AG04449 (cell line): ENCODE measurements at regions of chr16 and their contacts with region 1.

Region 1: GRCh38 chr16:27235055-27235937 is 32.0 kb downstream of the KDM8 start:
- DNase-seq: peak; percentile 41
- H3K4me3 ChIP-seq: no peak overlapping the region; the same call in 1 of the 2 replicates
- CTCF ChIP-seq: peak; percentile 82

Region 2: DNA sequence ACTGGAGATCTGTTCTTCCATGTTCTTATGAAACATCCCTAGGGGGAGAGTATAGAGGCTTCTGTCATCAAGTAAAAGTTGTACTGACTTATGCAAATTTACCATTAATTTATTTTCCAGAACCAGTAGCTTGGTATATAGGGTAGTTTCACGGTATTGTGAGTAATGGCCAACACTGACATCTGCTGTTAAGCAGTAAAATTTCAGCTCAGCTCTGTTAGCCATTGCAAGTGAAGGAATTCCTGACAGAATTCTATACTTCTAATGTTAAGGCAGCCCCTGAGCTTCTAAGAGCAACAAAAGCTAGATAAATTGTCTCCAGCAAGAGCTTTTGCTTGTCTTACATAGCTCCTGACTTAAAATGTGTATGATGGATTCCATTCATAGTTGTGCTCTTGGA is 782.1 kb before region 1 on chr16:
- CTCF ChIA-PET with region 1: no interaction called
- POLR2A ChIA-PET with region 1: no interaction called
- DNase-seq: no peak
- H3K4me3 ChIP-seq: no peak overlapping the region
- CTCF ChIP-seq: no peak

Region 3: DNA sequence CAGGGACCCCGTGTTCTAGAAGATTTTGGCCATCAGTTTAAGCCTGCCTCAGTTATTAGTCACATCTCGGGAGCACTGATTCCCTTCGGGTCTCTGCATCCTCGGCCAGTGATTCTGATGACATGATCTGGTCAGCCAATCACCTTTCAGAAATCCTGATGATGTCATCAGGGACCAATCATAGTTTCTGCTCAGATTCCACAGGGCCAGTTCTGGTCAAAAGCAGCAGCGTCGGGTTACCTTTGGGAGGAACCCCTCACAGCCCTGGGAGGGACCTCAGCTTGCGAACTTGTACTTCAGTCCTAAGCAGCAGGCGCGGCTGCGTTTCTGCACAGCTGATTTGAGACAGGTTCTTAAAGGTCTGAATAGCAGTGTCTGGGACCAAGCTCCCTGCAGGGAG is 18.0 kb before region 1 on chr16:
- CTCF ChIA-PET with region 1: interaction called, 97 read pairs
- POLR2A ChIA-PET with region 1: no interaction called
- DNase-seq: no peak
- H3K4me3 ChIP-seq: no peak overlapping the region
- CTCF ChIP-seq: no peak

Region 4: DNA sequence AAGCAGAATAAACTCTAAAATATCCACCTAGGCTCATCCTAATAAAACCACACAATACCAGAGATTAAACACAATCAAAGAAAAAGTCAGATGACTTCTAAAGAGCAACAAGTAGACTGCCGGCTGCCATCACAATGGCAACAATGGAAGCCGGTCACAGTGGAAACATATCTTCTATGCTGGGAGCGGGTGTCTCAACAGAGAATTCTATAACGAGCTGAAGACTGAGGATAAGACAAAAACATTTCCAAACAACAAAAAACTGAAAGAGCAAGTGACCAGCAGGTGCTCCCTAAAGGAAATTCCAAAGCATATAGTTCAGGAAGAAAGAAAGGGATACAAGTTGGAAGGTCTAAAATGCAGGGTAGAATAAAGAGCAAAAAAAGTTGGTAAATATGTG is 24.4 kb after region 1 on chr16:
- CTCF ChIA-PET with region 1: interaction called, 15 read pairs
- POLR2A ChIA-PET with region 1: interaction called, 3 read pairs
- DNase-seq: no peak
- H3K4me3 ChIP-seq: no peak overlapping the region
- CTCF ChIP-seq: no peak

Region 5: GRCh38 chr16:27340654-27341053 is 105.4 kb after region 1 on chr16:
- CTCF ChIA-PET with region 1: interaction called, 13 read pairs
- POLR2A ChIA-PET with region 1: no interaction called
- DNase-seq: no peak
- H3K4me3 ChIP-seq: no peak overlapping the region
- CTCF ChIP-seq: no peak

Region 6: DNA sequence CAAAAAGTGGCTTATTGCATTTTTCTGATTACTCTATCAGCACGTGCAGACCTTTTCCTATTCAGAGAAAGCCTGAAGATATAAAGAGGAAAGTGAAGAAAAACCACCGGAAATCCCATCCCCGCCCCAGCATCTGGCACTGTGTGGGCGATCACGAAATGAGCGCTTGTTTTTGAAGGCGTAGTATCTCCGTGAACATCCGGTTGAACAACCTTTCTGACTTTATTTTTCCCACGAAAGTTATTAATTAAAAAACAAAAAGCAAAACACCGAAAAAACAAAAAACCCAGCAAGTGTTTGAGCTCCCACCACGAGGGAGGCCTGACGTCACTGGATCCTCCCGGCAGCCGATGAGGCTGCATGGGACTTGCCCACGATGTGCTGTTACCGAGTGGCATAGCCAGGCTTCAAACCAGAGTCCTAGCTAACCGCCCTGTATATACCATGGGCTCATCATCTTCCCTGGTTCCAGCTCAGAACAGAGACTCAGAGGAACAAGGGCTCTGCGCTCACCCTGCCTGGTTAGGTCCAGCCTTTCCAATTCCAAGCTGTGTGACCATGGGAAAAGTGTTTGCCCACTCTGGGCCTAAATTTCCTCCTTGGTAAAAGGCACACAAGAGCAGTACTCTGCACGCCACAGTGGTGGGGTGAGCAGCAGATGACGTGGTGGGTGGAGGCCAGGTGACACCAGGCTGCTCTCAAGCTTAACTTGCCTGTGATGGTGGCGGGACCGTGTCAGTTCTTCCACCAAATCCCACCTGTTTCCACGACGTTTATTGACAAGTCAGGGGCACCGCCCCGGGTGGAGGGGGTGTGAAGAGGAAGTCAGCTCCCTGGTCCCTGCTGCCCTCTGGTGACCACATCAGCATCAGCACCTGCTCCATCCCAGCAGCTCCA is 132.4 kb after region 1 on chr16:
- CTCF ChIA-PET with region 1: interaction called, 355 read pairs
- POLR2A ChIA-PET with region 1: interaction called, 6 read pairs
- DNase-seq: no peak
- H3K4me3 ChIP-seq: peak overlapping the region; percentile 27
- CTCF ChIP-seq: peak; percentile 95

Region 7: GRCh38 chr16:27455700-27456099 is 220.4 kb after region 1 on chr16:
- CTCF ChIA-PET with region 1: interaction called, 37 read pairs
- POLR2A ChIA-PET with region 1: no interaction called
- DNase-seq: no peak
- H3K4me3 ChIP-seq: no peak overlapping the region
- CTCF ChIP-seq: no peak

Region 8: DNA sequence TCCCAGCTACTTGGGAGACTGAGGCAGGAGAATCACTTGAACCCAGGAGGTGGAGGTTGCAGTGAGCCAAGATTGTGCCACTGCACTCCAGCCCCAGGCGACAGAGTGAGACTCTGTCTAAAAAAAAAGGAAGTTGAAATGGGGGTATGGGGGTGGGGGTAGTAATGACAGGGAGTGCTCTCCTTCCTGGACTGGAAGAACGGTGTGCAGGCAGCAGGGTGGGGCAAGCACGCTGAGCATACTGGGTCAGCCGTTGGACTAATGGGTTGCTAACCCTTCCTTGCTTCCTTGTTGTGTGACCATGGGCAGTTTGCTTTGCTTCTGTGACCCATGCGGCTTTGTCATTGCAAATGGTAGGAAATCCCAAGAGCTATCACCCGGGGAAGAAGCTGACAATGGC is 331.1 kb after region 1 on chr16:
- CTCF ChIA-PET with region 1: no interaction called
- POLR2A ChIA-PET with region 1: no interaction called
- DNase-seq: no peak
- H3K4me3 ChIP-seq: no peak overlapping the region
- CTCF ChIP-seq: no peak